ENCODE measurements at regions of chr14 and their contacts with region 1.

Region 1: GRCh38 chr14:89773644-89774316 is 180.8 kb downstream of the EFCAB11 start:
- DNase-seq: peak; percentile 64 to 78 (median 77)
- H3K4me3 ChIP-seq: peak overlapping the region in 1 of 3 experiments; percentile 26
- H3K4me3 Mint-ChIP-seq: peak overlapping the region; percentile 31 to 77
- H3K27ac ChIP-seq: no peak overlapping the region
- H3K27ac Mint-ChIP-seq: peak overlapping the region in 6 of 7 donors; percentile 30 to 76 (median 42)
- H3K4me1 ChIP-seq: peaks cover 41 to 46% of the 10 kb centered on the region in 2 donors
- H3K4me1 Mint-ChIP-seq: peaks cover 55% of the 10 kb centered on the region
- H3K27me3 ChIP-seq: no peaks in the 10 kb centered on the region
- H3K27me3 Mint-ChIP-seq: peaks cover 0 to 4% (median 1%) of the 10 kb centered on the region in 3 donors
- CTCF ChIP-seq: no peak

Region 2: GRCh38 chr14:89730687-89731086 is 43.1 kb before region 1 on chr14:
- intact Hi-C with region 1: loop called in 1 of 2 experiments (anchors 5 kb)
- DNase-seq: peak; percentile 63 to 88 (median 84)
- H3K4me3 ChIP-seq: peak overlapping the region in 1 of 3 experiments; percentile 47
- H3K4me3 Mint-ChIP-seq: peak overlapping the region in 1 of 2 donors; percentile 65
- H3K27ac ChIP-seq: peak overlapping the region; percentile 71
- H3K27ac Mint-ChIP-seq: peak overlapping the region; percentile 73 to 94 (median 90)
- H3K4me1 ChIP-seq: peaks cover 29% of the 10 kb centered on the region in 2 donors
- H3K4me1 Mint-ChIP-seq: peaks cover 30% of the 10 kb centered on the region
- H3K27me3 ChIP-seq: no peaks in the 10 kb centered on the region
- H3K27me3 Mint-ChIP-seq: peaks cover 0 to 3% (median 3%) of the 10 kb centered on the region in 3 donors
- CTCF ChIP-seq: no peak

Region 3: GRCh38 chr14:89792489-89793366 is 18.9 kb after region 1 on chr14:
- intact Hi-C with region 1: no loop called
- DNase-seq: no peak
- H3K4me3 ChIP-seq: no peak overlapping the region
- H3K4me3 Mint-ChIP-seq: no peak overlapping the region
- H3K27ac ChIP-seq: no peak overlapping the region
- H3K27ac Mint-ChIP-seq: peak overlapping the region in 2 of 7 donors; percentile 24 to 66
- H3K4me1 ChIP-seq: peaks cover 0 to 2% of the 10 kb centered on the region in 2 donors
- H3K4me1 Mint-ChIP-seq: peaks cover 15% of the 10 kb centered on the region
- H3K27me3 ChIP-seq: no peaks in the 10 kb centered on the region
- H3K27me3 Mint-ChIP-seq: peaks cover 0 to 4% (median 1%) of the 10 kb centered on the region in 3 donors
- CTCF ChIP-seq: no peak